MCF 10A (cell line): ENCODE measurements at regions of chr11 and their contacts with region 1.

Region 1: GRCh38 chr11:66744485-66745340 is 15.7 kb upstream of the SPTBN2 start:
- DNase-seq: peak; percentile 91
- H3K4me3 Mint-ChIP-seq: peak overlapping the region; percentile 92
- H3K27ac Mint-ChIP-seq: peak overlapping the region; percentile 81
- H3K4me1 Mint-ChIP-seq: peaks cover 25% of the 10 kb centered on the region
- H3K27me3 Mint-ChIP-seq: no peaks in the 10 kb centered on the region
- CTCF ChIP-seq: no peak

Region 2: GRCh38 chr11:66694732-66695207 is 49.9 kb before region 1 on chr11:
- CTCF ChIA-PET with region 1: interaction called, 10 read pairs
- POLR2A ChIA-PET with region 1: no interaction called
- intact Hi-C with region 1: no loop called
- DNase-seq: peak; percentile 96
- H3K4me3 Mint-ChIP-seq: no peak overlapping the region
- H3K27ac Mint-ChIP-seq: peak overlapping the region; percentile 69
- H3K4me1 Mint-ChIP-seq: no peaks in the 10 kb centered on the region
- H3K27me3 Mint-ChIP-seq: no peaks in the 10 kb centered on the region
- CTCF ChIP-seq: peak; percentile 94

Region 3: GRCh38 chr11:66727282-66727882 is 17.3 kb before region 1 on chr11:
- CTCF ChIA-PET with region 1: interaction called, 7 read pairs
- POLR2A ChIA-PET with region 1: interaction called, 55 read pairs
- intact Hi-C with region 1: no loop called
- DNase-seq: peak; percentile 40
- H3K4me3 Mint-ChIP-seq: peak overlapping the region; percentile 82
- H3K27ac Mint-ChIP-seq: peak overlapping the region; percentile 49
- H3K4me1 Mint-ChIP-seq: peaks cover 18% of the 10 kb centered on the region
- H3K27me3 Mint-ChIP-seq: no peaks in the 10 kb centered on the region
- CTCF ChIP-seq: no peak

Region 4: DNA sequence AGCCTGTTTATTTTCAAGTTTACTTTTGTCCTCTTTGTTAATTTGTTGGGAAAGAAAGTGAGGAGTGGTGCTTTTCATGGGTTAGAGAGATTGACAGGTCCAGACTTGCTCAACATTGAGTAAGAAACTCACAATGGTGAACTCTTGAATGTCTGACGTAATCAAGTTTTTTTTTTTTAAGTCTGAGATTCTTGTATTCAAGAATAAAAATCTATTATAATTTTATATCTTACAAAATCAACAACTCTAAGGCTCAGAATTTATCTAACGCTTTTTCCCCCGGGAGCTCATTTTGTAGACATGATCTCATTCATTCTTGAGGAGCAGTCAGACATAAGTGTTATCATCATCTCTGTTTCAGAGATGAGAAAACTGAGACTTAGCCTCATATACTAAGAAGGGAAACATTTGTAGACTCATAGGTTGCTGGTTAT is 23.4 kb after region 1 on chr11:
- CTCF ChIA-PET with region 1: interaction called, 8 read pairs
- POLR2A ChIA-PET with region 1: interaction called, 145 read pairs
- intact Hi-C with region 1: no loop called
- DNase-seq: peak; percentile 92
- H3K4me3 Mint-ChIP-seq: peak overlapping the region; percentile 53
- H3K27ac Mint-ChIP-seq: peak overlapping the region; percentile 90
- H3K4me1 Mint-ChIP-seq: peaks cover 38% of the 10 kb centered on the region
- H3K27me3 Mint-ChIP-seq: no peaks in the 10 kb centered on the region
- CTCF ChIP-seq: no peak

Region 5: DNA sequence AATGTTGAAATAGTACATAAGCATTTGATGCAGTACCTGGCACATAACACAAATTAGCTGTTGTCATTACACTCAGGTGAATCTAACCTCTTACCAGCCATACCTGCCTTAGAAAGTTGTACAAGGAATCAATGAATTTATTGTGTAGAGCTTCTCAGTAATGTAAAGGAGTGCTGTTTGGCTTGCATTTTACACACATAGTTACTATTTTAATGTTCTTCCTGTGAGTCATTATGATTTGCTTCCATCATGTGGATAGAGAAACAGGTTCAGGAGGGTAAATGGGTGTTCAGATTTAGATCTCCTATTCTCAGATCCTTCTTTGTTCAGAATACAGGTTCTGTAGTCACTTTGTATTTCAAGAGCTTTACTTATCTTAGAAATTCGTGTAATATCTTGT is 70.9 kb after region 1 on chr11:
- CTCF ChIA-PET with region 1: no interaction called
- POLR2A ChIA-PET with region 1: interaction called, 7 read pairs
- intact Hi-C with region 1: loop called (anchors 10 kb)
- DNase-seq: no peak
- H3K4me3 Mint-ChIP-seq: no peak overlapping the region
- H3K27ac Mint-ChIP-seq: peak overlapping the region; percentile 63
- H3K4me1 Mint-ChIP-seq: peaks cover 7% of the 10 kb centered on the region
- H3K27me3 Mint-ChIP-seq: no peaks in the 10 kb centered on the region
- CTCF ChIP-seq: no peak